PC-9 (cell line): ENCODE measurements at regions of chr16 and their contacts with region 1.

Region 1: DNA sequence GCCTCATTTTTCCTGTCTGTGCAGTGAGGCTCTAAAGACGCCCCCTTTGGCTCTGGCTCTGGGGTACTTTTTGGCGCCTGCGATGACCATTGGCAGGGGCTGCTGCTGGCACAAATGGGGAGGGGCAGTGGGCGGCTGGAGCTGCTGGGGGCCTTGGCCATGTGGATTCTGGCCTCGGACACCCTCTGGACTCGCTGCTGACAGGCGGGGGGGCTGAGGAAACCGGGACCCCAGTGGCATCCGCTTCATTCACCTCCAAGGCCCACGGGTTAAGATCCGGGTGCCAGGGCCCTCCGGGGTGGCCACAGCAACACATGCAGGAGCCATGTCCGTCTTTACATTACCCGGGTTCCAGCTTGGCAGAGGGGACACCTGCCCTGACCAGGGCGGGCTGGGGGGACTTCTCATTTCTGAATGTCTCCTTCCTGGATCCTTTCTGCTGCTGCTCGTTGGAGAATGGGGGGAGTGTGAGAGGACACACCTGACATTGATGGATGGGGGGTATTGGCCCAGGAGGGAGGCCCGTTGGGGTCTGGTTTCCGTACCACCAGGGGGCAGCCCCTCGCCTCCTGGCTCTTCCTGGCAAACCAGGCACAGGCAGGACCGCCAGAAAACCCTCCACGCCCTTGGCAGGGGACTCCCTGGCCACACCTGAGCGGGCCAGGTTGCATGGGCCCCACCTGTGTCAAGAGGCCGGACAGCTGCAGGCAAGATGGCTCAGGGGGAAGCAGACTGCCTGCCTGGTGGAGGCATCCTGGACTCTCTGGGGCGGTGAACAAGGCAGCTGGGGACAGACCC is 21.8 kb downstream of the GSE1 start:
- DNase-seq: no peak
- H3K4me3 ChIP-seq: no peak overlapping the region
- H3K27ac ChIP-seq: no peak overlapping the region
- H3K4me1 ChIP-seq: no peaks in the 10 kb centered on the region
- H3K27me3 ChIP-seq: no peaks in the 10 kb centered on the region
- CTCF ChIP-seq: no peak

Region 2: GRCh38 chr16:85621698-85622428 is 13.1 kb before region 1 on chr16:
- CTCF ChIA-PET with region 1: no interaction called
- POLR2A ChIA-PET with region 1: interaction called, 12 read pairs
- intact Hi-C with region 1: no loop called
- DNase-seq: peak; percentile 58 to 80
- H3K4me3 ChIP-seq: no peak overlapping the region
- H3K27ac ChIP-seq: no peak overlapping the region
- H3K4me1 ChIP-seq: peaks cover 23% of the 10 kb centered on the region
- H3K27me3 ChIP-seq: no peaks in the 10 kb centered on the region
- CTCF ChIP-seq: no peak